Naive thymus-derived CD4-positive, alpha-beta T cell (primary cell): ENCODE measurements at regions of chr22 and their contacts with region 1.

Region 1: DNA sequence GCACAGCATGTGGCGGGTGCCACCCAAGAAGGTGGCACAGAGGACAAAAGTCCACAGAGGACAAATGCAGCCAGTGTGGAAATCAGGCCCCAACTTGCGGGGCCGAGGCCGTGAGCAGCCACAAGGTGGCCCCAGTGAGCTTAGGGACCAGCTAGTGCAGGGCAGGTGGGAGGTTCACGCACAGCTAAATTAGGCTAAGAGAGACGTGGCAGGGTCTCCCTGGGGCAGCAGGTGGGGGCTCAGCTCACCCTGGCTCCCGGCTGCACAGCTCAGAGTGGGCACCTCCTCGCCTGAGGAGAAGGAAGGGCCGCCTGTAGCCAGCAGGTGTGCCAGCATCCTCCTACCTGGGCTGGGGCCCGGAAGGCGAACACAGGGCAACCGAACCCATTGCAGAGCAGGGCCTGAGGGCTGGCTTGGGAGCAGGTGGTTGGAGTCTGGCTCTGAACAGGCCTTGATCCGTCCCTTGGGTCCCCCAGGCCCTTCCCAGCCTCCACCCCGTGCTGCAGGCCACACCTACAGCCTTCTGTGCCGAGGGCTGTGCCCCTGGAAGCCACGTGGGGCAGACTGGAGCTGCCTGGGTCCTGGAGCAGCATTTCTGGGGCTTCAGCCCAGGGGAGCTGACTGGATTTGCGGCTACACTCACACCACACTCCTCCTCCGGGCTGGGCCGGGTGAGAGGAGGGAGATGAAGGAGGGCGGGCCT is 26.1 kb upstream of the CELSR1 start:
- DNase-seq: peak; percentile 60 to 82 (median 73)
- ATAC-seq: peak; percentile 94
- H3K4me3 ChIP-seq: peak overlapping the region; percentile 34
- H3K4me3 Mint-ChIP-seq: peak overlapping the region in 6 of 10 donors; percentile 54 to 65 (median 58)
- H3K27ac ChIP-seq: no peak overlapping the region
- H3K27ac Mint-ChIP-seq: peak overlapping the region in 1 of 9 donors; percentile 18
- H3K4me1 ChIP-seq: peaks cover 0 to 5% of the 10 kb centered on the region in 2 donors
- H3K4me1 Mint-ChIP-seq: peaks cover 4 to 11% (median 4%) of the 10 kb centered on the region in 7 donors
- H3K27me3 ChIP-seq: no peaks in the 10 kb centered on the region
- H3K27me3 Mint-ChIP-seq: no peaks in the 10 kb centered on the region

Region 2: GRCh38 chr22:46501701-46502100 is 61.8 kb before region 1 on chr22:
- CTCF ChIA-PET with region 1: no interaction called
- POLR2A ChIA-PET with region 1: no interaction called
- intact Hi-C with region 1: no loop called
- DNase-seq: no peak
- ATAC-seq: no peak
- H3K4me3 ChIP-seq: no peak overlapping the region
- H3K4me3 Mint-ChIP-seq: no peak overlapping the region
- H3K27ac ChIP-seq: no peak overlapping the region
- H3K27ac Mint-ChIP-seq: no peak overlapping the region
- H3K4me1 ChIP-seq: peaks cover 0 to 6% of the 10 kb centered on the region in 2 donors
- H3K4me1 Mint-ChIP-seq: peaks cover 0 to 20% (median 14%) of the 10 kb centered on the region in 7 donors
- H3K27me3 ChIP-seq: no peaks in the 10 kb centered on the region
- H3K27me3 Mint-ChIP-seq: peaks cover 0 to 40% (median 19%) of the 10 kb centered on the region in 5 donors

Region 3: DNA sequence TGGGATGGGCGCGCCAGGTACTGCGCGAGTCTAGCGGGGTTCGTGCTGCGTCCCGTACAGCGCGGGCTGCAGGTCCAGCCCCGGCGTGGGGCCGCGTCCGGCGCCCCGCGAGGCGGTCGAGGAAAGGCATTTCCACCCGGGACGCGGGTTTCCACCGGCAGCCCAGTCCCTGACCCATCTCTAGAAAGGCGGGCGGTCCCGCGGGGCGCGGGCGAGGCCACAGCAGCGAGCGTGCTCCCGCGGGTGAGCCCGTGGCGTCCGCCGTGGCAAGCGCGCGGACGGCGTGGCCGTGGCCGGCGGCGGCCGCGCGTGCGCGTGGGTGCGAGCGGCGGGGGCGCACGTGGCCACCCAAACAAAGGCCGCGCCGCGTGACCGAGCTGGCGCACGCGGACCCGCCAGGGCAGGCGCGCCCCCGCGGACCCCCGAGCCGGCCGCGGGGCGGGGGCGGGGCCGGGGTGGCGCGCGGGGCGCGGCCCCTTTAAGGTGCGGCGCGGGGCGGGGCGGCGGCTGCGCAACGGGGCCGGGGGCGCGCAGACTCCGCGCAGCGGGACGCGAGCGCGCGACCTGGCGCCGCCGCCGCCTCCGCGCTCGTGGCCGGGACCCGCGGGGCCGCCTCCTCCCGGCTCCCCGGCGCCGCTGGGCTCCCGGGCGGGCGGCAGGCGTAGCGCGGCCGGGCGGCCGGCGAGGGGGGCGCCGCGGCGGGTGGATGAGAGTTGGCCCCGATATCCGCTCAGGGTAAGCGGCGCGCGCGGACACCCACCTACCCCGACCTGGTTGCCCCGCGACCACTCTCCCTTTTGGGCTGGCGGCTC is 13.2 kb after region 1 on chr22:
- CTCF ChIA-PET with region 1: interaction called, 5 read pairs
- POLR2A ChIA-PET with region 1: no interaction called
- intact Hi-C with region 1: loop called in 1 of 2 experiments (anchors 1 kb)
- DNase-seq: peak; percentile 44 to 82 (median 65)
- ATAC-seq: peak; percentile 89
- H3K4me3 ChIP-seq: peak overlapping the region; percentile 66
- H3K4me3 Mint-ChIP-seq: peak overlapping the region; percentile 72 to 91 (median 84)
- H3K27ac ChIP-seq: peak overlapping the region; percentile 37
- H3K27ac Mint-ChIP-seq: peak overlapping the region in 7 of 9 donors; percentile 70 to 84 (median 77)
- H3K4me1 ChIP-seq: peaks cover 16 to 25% of the 10 kb centered on the region in 2 donors
- H3K4me1 Mint-ChIP-seq: peaks cover 36 to 51% (median 47%) of the 10 kb centered on the region in 7 donors
- H3K27me3 ChIP-seq: no peaks in the 10 kb centered on the region
- H3K27me3 Mint-ChIP-seq: no peaks in the 10 kb centered on the region

Region 4: GRCh38 chr22:46613606-46614021 is 50.1 kb after region 1 on chr22:
- CTCF ChIA-PET with region 1: interaction called, 3 read pairs
- POLR2A ChIA-PET with region 1: no interaction called
- intact Hi-C with region 1: loop called in 1 of 2 experiments (anchors 1 kb)
- DNase-seq: peak in 1 of 9 donors; percentile 33
- ATAC-seq: no peak
- H3K4me3 ChIP-seq: peak overlapping the region; percentile 71
- H3K4me3 Mint-ChIP-seq: peak overlapping the region; percentile 88 to 96 (median 92)
- H3K27ac ChIP-seq: no peak overlapping the region
- H3K27ac Mint-ChIP-seq: peak overlapping the region; percentile 72 to 95 (median 85)
- H3K4me1 ChIP-seq: peaks cover 23 to 24% of the 10 kb centered on the region in 2 donors
- H3K4me1 Mint-ChIP-seq: peaks cover 22 to 39% (median 29%) of the 10 kb centered on the region in 7 donors
- H3K27me3 ChIP-seq: no peaks in the 10 kb centered on the region
- H3K27me3 Mint-ChIP-seq: no peaks in the 10 kb centered on the region

Region 5: GRCh38 chr22:46635756-46636155 is 72.2 kb after region 1 on chr22:
- CTCF ChIA-PET with region 1: interaction called, 3 read pairs
- POLR2A ChIA-PET with region 1: no interaction called
- intact Hi-C with region 1: loop called in 1 of 2 experiments (anchors 2 kb)
- DNase-seq: no peak
- ATAC-seq: no peak
- H3K4me3 ChIP-seq: no peak overlapping the region
- H3K4me3 Mint-ChIP-seq: no peak overlapping the region
- H3K27ac ChIP-seq: no peak overlapping the region
- H3K27ac Mint-ChIP-seq: no peak overlapping the region
- H3K4me1 ChIP-seq: no peaks in the 10 kb centered on the region
- H3K4me1 Mint-ChIP-seq: peaks cover 0 to 7% (median 5%) of the 10 kb centered on the region in 7 donors
- H3K27me3 ChIP-seq: no peaks in the 10 kb centered on the region
- H3K27me3 Mint-ChIP-seq: no peaks in the 10 kb centered on the region

Region 6: GRCh38 chr22:46674367-46674781 is 110.8 kb after region 1 on chr22:
- CTCF ChIA-PET with region 1: interaction called, 7 read pairs
- POLR2A ChIA-PET with region 1: no interaction called
- intact Hi-C with region 1: loop called (anchors 1 kb)
- DNase-seq: peak; percentile 57 to 96 (median 85)
- ATAC-seq: peak; percentile 89
- H3K4me3 ChIP-seq: peak overlapping the region; percentile 73
- H3K4me3 Mint-ChIP-seq: peak overlapping the region; percentile 88 to 98 (median 92)
- H3K27ac ChIP-seq: peak overlapping the region; percentile 71
- H3K27ac Mint-ChIP-seq: peak overlapping the region; percentile 92 to 99 (median 94)
- H3K4me1 ChIP-seq: peaks cover 12 to 32% of the 10 kb centered on the region in 2 donors
- H3K4me1 Mint-ChIP-seq: peaks cover 24 to 36% (median 30%) of the 10 kb centered on the region in 7 donors
- H3K27me3 ChIP-seq: no peaks in the 10 kb centered on the region
- H3K27me3 Mint-ChIP-seq: no peaks in the 10 kb centered on the region

Region 7: GRCh38 chr22:46681010-46681409 is 117.5 kb after region 1 on chr22:
- CTCF ChIA-PET with region 1: interaction called, 4 read pairs
- POLR2A ChIA-PET with region 1: no interaction called
- intact Hi-C with region 1: loop called (anchors 1 to 5 kb)
- DNase-seq: no peak
- ATAC-seq: no peak
- H3K4me3 ChIP-seq: no peak overlapping the region
- H3K4me3 Mint-ChIP-seq: no peak overlapping the region
- H3K27ac ChIP-seq: no peak overlapping the region
- H3K27ac Mint-ChIP-seq: peak overlapping the region in 2 of 9 donors; percentile 18 to 74
- H3K4me1 ChIP-seq: peaks cover 0 to 23% of the 10 kb centered on the region in 2 donors
- H3K4me1 Mint-ChIP-seq: peaks cover 15 to 33% (median 21%) of the 10 kb centered on the region in 7 donors
- H3K27me3 ChIP-seq: no peaks in the 10 kb centered on the region
- H3K27me3 Mint-ChIP-seq: no peaks in the 10 kb centered on the region

Region 8: GRCh38 chr22:46798366-46799350 is 235.1 kb after region 1 on chr22:
- CTCF ChIA-PET with region 1: interaction called, 18 read pairs
- POLR2A ChIA-PET with region 1: interaction called, 3 read pairs
- intact Hi-C with region 1: loop called (anchors 1 kb)
- DNase-seq: peak; percentile 37 to 78 (median 59)
- ATAC-seq: peak; percentile 84
- H3K4me3 ChIP-seq: no peak overlapping the region
- H3K4me3 Mint-ChIP-seq: peak overlapping the region in 2 of 10 donors; percentile 13 to 34
- H3K27ac ChIP-seq: no peak overlapping the region
- H3K27ac Mint-ChIP-seq: peak overlapping the region; percentile 49 to 91 (median 80)
- H3K4me1 ChIP-seq: peaks cover 7 to 8% of the 10 kb centered on the region in 2 donors
- H3K4me1 Mint-ChIP-seq: peaks cover 11 to 36% (median 20%) of the 10 kb centered on the region in 7 donors
- H3K27me3 ChIP-seq: no peaks in the 10 kb centered on the region
- H3K27me3 Mint-ChIP-seq: no peaks in the 10 kb centered on the region